Calu3 (cell line): ENCODE measurements at regions of chr2 and their contacts with region 1.

Region 1: GRCh38 chr2:193963472-193964119 is 1693.4 kb upstream of the SLC39A10 start:
- DNase-seq: peak; percentile 62
- H3K4me3 Mint-ChIP-seq: no peak overlapping the region
- H3K27ac Mint-ChIP-seq: peak overlapping the region; percentile 39
- H3K4me1 Mint-ChIP-seq: peaks cover 22% of the 10 kb centered on the region
- H3K27me3 Mint-ChIP-seq: no peaks in the 10 kb centered on the region
- CTCF ChIP-seq: peak; percentile 61

Region 2: DNA sequence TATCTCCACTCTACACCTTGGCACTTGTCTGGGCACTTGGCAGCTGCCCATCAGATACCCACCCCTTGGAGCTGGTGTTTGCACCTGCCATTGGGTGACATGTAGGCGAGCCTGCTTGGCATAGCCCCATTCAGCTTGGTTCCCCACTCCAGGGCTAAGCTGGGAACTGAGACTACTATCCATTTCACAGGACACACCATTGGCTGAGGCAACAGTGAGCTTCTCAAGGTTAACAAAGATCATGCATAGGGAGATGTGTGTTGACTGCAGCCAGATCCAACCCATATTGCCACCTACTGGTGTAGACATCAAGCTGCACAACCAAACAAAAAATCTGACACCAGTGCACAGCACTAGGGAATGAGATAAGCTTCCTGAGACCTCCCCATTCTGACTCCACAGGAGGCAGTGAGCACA is 379.1 kb before region 1 on chr2:
- CTCF ChIA-PET with region 1: no interaction called
- intact Hi-C with region 1: no loop called
- DNase-seq: peak; percentile 15
- H3K4me3 Mint-ChIP-seq: no peak overlapping the region
- H3K27ac Mint-ChIP-seq: no peak overlapping the region
- H3K4me1 Mint-ChIP-seq: peaks cover 37% of the 10 kb centered on the region
- H3K27me3 Mint-ChIP-seq: no peaks in the 10 kb centered on the region
- CTCF ChIP-seq: peak; percentile 52

Region 3: DNA sequence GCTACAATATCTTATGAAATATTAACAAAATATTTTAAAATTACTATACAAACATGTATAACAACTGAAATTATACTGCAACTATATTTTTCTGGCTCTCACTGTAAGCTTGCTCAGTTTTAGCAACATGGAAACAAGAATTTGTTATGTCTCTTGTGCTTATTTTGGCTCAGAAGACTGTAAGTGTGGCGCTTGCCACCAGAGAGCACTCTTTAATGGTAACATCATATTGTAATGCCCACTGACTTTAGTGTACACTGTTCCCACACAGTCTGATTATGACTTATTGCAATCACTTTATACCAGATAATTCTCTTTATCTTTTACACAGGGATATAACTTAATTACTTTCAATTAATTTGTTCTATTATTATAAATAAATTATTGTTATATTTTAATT is 268.2 kb before region 1 on chr2:
- CTCF ChIA-PET with region 1: no interaction called
- intact Hi-C with region 1: loop called (anchors 1 kb)
- DNase-seq: peak; percentile 19
- H3K4me3 Mint-ChIP-seq: no peak overlapping the region
- H3K27ac Mint-ChIP-seq: no peak overlapping the region
- H3K4me1 Mint-ChIP-seq: no peaks in the 10 kb centered on the region
- H3K27me3 Mint-ChIP-seq: no peaks in the 10 kb centered on the region
- CTCF ChIP-seq: peak; percentile 29